Colonic mucosa (tissue), 4 donors: ENCODE measurements at regions of chr4 and their contacts with region 1.

Region 1: GRCh38 chr4:47106561-47106960 is 75.2 kb downstream of the GABRB1 start:
- DNase-seq: no peak
- H3K4me3 ChIP-seq: no peak overlapping the region
- H3K27ac ChIP-seq: no peak overlapping the region
- H3K4me1 ChIP-seq: no peaks in the 10 kb centered on the region
- H3K27me3 ChIP-seq: no peaks in the 10 kb centered on the region
- CTCF ChIP-seq: no peak

Region 2: GRCh38 chr4:46878641-46879040 is 227.9 kb before region 1 on chr4:
- intact Hi-C with region 1: no loop called
- DNase-seq: no peak
- H3K4me3 ChIP-seq: no peak overlapping the region
- H3K27ac ChIP-seq: no peak overlapping the region
- H3K4me1 ChIP-seq: no peaks in the 10 kb centered on the region
- H3K27me3 ChIP-seq: no peaks in the 10 kb centered on the region
- CTCF ChIP-seq: no peak

Region 3: GRCh38 chr4:47383829-47384427 is 277.4 kb after region 1 on chr4:
- intact Hi-C with region 1: loop called (anchors 10 kb)
- DNase-seq: no peak
- H3K4me3 ChIP-seq: no peak overlapping the region
- H3K27ac ChIP-seq: no peak overlapping the region
- H3K4me1 ChIP-seq: no peaks in the 10 kb centered on the region
- H3K27me3 ChIP-seq: no peaks in the 10 kb centered on the region
- CTCF ChIP-seq: peak; percentile 30